MCF 10A (cell line): ENCODE measurements at regions of chr15 and their contacts with region 1.

Region 1: DNA sequence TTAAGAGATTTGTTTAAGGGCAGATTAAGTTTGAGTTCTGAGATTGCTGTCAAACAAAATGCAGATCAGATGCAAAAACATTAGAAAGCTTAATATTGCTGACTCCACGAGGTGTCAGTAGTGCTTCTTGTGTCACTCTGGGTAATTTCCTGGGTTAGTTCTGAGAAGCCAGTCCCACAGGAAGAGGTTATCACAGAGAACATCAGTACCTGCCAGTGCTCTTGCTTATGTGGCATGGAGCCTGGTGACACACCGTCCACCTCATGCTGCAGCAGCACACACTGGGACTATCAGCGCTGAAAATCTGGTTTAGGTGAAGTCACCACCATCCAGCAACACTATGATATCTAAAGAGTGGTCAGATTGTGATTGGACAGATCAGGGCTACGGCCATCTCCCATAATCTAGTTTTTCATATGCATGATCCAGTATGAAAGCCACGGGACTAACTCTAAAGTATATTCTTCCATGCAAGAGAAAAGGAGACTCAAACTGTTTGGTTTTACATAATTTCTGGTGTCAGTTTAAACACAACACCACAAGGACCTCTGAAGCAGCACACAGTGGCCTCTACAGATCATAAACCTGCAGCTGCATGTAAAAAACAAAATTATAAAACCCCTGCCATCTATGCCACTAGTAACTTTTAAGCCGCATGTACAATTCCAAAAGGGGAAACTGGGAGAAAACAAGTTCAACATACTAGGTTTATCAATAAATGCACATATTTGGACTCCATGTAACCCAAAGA is 36.1 kb upstream of the MYO5C start:
- DNase-seq: peak; percentile 62
- H3K4me3 Mint-ChIP-seq: no peak overlapping the region
- H3K27ac Mint-ChIP-seq: peak overlapping the region; percentile 57
- H3K4me1 Mint-ChIP-seq: peaks cover 21% of the 10 kb centered on the region
- H3K27me3 Mint-ChIP-seq: no peaks in the 10 kb centered on the region
- CTCF ChIP-seq: peak; percentile 46

Region 2: GRCh38 chr15:52278636-52279370 is 52.9 kb before region 1 on chr15:
- CTCF ChIA-PET with region 1: no interaction called
- POLR2A ChIA-PET with region 1: no interaction called
- intact Hi-C with region 1: no loop called
- DNase-seq: no peak
- H3K4me3 Mint-ChIP-seq: no peak overlapping the region
- H3K27ac Mint-ChIP-seq: peak overlapping the region; percentile 12
- H3K4me1 Mint-ChIP-seq: no peaks in the 10 kb centered on the region
- H3K27me3 Mint-ChIP-seq: no peaks in the 10 kb centered on the region
- CTCF ChIP-seq: no peak

Region 3: GRCh38 chr15:52295421-52296001 is 36.2 kb before region 1 on chr15 and contains the start of gene MYO5C:
- CTCF ChIA-PET with region 1: no interaction called
- POLR2A ChIA-PET with region 1: interaction called, 11 read pairs
- intact Hi-C with region 1: no loop called
- DNase-seq: peak; percentile 91
- H3K4me3 Mint-ChIP-seq: peak within 1 kb of the TSS; percentile 69
- H3K27ac Mint-ChIP-seq: peak within 1 kb of the TSS; percentile 77
- H3K4me1 Mint-ChIP-seq: peaks cover 31% of the 10 kb centered on the region
- H3K27me3 Mint-ChIP-seq: no peaks in the 10 kb centered on the region
- CTCF ChIP-seq: no peak
- total RNA-seq, gene MYO5C: 25.7 and 29.4 TPM in 2 replicates

Region 4: GRCh38 chr15:52464478-52464877 is 132.8 kb after region 1 on chr15:
- CTCF ChIA-PET with region 1: interaction called, 3 read pairs
- POLR2A ChIA-PET with region 1: interaction called, 4 read pairs
- intact Hi-C with region 1: loop called (anchors 1 kb)
- DNase-seq: no peak
- H3K4me3 Mint-ChIP-seq: no peak overlapping the region
- H3K27ac Mint-ChIP-seq: no peak overlapping the region
- H3K4me1 Mint-ChIP-seq: peaks cover 6% of the 10 kb centered on the region
- H3K27me3 Mint-ChIP-seq: no peaks in the 10 kb centered on the region
- CTCF ChIP-seq: no peak

Region 5: GRCh38 chr15:52528991-52529926 is 197.6 kb after region 1 on chr15:
- CTCF ChIA-PET with region 1: interaction called, 3 read pairs
- POLR2A ChIA-PET with region 1: no interaction called
- intact Hi-C with region 1: loop called (anchors 1 kb)
- DNase-seq: peak; percentile 65
- H3K4me3 Mint-ChIP-seq: peak overlapping the region; percentile 78
- H3K27ac Mint-ChIP-seq: no peak overlapping the region
- H3K4me1 Mint-ChIP-seq: no peaks in the 10 kb centered on the region
- H3K27me3 Mint-ChIP-seq: no peaks in the 10 kb centered on the region
- CTCF ChIP-seq: no peak

Region 6: GRCh38 chr15:52568601-52569256 is 237.1 kb after region 1 on chr15 and contains the start of gene ARPP19:
- CTCF ChIA-PET with region 1: interaction called, 8 read pairs
- POLR2A ChIA-PET with region 1: interaction called, 3 read pairs
- intact Hi-C with region 1: loop called (anchors 1 kb)
- DNase-seq: peak; percentile 96
- H3K4me3 Mint-ChIP-seq: peak within 1 kb of the TSS; percentile 77
- H3K27ac Mint-ChIP-seq: peak within 1 kb of the TSS; percentile 85
- H3K4me1 Mint-ChIP-seq: peaks cover 5% of the 10 kb centered on the region
- H3K27me3 Mint-ChIP-seq: no peaks in the 10 kb centered on the region
- CTCF ChIP-seq: no peak
- total RNA-seq, gene ARPP19: 172 and 213 TPM in 2 replicates

Region 7: DNA sequence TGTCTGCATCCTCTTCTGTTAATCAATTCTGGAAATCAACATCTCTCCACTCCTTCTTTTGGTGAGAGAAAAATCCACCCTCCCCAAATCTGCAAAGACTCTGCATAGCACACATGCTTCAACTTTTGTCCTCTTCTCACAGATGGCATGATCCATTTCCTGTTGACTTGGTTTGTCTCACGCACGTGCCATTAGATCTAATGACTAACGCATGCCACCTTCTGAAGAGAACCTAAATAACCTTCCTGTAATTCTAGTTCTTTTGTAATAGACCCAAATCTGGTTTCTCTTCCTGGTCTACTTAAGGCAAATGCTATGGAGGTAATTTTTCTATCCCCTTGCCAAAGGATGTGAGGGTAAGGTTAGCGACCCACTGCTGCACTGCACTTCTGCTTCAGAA is 398.5 kb after region 1 on chr15:
- CTCF ChIA-PET with region 1: interaction called, 12 read pairs
- POLR2A ChIA-PET with region 1: interaction called, 7 read pairs
- intact Hi-C with region 1: loop called (anchors 1 kb)
- DNase-seq: peak; percentile 66
- H3K4me3 Mint-ChIP-seq: no peak overlapping the region
- H3K27ac Mint-ChIP-seq: peak overlapping the region; percentile 49
- H3K4me1 Mint-ChIP-seq: peaks cover 13% of the 10 kb centered on the region
- H3K27me3 Mint-ChIP-seq: no peaks in the 10 kb centered on the region
- CTCF ChIP-seq: no peak

Region 8: DNA sequence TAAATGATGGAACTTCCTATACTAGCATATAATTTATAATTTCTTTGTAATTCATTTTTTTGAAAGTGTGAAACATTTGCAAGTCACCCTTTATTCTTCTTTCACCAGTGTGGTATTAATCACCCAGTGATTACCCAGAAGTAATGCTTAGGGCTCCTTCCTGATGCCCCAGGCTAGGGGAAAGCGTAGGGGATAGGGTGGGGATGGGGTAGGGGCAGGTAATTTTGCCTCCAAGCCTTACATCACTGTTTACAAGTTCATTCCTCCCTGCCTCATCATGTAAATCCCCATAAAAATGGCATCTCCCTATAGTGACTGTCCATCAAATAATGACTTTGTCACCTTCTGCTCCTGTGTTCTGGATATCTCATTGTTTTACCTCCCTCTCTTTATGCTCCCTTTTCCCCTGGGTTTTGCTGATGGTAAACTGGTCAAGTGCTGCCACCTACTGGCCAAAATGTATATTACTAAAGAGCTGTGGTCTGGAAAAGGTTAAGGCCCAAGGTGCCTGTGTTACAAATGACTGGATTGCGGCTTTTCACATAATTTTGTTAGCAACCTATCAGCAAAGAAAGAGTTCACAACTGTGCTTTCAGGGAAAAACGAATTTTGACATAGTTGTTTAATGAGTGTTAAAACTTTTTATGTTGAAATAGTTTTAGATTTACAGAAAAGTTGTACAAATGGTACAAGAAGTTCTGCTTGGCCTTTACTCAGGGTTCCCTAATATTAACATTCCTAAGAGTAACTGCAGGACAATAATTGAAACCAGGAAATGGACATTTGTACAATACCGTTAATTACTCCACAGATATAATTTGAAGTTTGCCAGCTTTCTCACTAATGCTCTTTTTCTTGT is 403.8 kb after region 1 on chr15:
- CTCF ChIA-PET with region 1: interaction called, 12 read pairs
- POLR2A ChIA-PET with region 1: interaction called, 7 read pairs
- intact Hi-C with region 1: loop called (anchors 1 kb)
- DNase-seq: peak; percentile 81
- H3K4me3 Mint-ChIP-seq: no peak overlapping the region
- H3K27ac Mint-ChIP-seq: no peak overlapping the region
- H3K4me1 Mint-ChIP-seq: peaks cover 1% of the 10 kb centered on the region
- H3K27me3 Mint-ChIP-seq: no peaks in the 10 kb centered on the region
- CTCF ChIP-seq: peak; percentile 81